ENCODE measurements at regions of chr4 and their contacts with region 1.

Region 1: GRCh38 chr4:56467284-56468096 is at the start of gene SRP72:
- DNase-seq: peak; percentile 87
- H3K4me3 Mint-ChIP-seq: peak within 1 kb of the TSS; percentile 100
- H3K27ac Mint-ChIP-seq: peak within 1 kb of the TSS; percentile 100
- H3K4me1 Mint-ChIP-seq: peaks cover 38% of the 10 kb centered on the region
- H3K27me3 Mint-ChIP-seq: no peaks in the 10 kb centered on the region
- total RNA-seq, gene SRP72: 187 and 191 TPM in 2 replicates

Region 2: DNA sequence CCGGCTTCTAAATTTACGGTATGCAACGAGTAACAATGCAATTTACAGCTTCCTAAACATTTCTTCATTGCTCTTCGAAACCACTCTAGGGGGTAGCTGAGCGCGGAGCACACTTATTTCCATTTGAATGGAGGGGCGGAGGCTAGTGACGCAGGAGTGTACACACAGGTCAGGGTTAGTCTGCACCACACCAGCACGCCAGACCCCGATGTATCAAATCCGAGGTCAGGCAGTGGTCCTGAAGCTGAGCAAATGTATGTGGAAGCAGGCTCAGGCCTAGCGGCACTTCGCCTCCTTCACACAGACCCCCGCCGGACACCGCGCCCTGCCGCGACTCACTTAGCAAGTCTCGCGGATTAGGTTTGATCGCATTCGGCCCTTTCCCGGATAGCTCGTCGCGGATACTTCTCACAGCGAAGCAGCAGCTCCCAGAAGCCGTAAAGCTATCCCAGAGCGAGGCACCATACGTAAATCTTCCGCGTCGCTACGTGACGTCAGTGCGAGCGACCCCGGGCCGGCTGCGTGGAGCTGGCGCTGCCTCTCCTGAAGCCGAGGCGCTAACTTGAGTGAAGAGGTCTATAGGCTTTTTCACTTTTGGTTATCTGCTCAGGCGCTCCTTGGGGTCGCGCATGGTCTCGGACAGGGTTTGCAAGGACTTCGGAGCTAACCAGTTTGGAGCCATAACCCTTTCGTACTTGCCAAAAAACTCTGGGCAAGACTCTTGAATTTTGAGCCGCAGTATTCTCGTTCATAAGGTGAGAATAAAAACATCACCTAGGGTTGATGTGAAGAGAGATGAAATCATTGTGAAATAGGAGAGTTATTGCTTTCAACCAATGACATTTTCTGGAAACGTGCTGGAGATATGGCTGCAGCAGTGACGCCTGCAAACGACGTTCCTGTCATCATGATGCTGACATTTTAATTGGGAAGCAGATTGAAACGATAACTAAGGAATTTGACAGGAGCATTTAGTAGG is 80.2 kb before region 1 on chr4 and contains the start of gene AASDH:
- intact Hi-C with region 1: loop called (anchors 1 kb)
- DNase-seq: peak; percentile 91
- H3K4me3 Mint-ChIP-seq: peak within 1 kb of the TSS; percentile 92
- H3K27ac Mint-ChIP-seq: peak within 1 kb of the TSS; percentile 98
- H3K4me1 Mint-ChIP-seq: peaks cover 25% of the 10 kb centered on the region
- H3K27me3 Mint-ChIP-seq: no peaks in the 10 kb centered on the region
- total RNA-seq, gene AASDH: 10.4 and 15.4 TPM in 2 replicates

Region 3: DNA sequence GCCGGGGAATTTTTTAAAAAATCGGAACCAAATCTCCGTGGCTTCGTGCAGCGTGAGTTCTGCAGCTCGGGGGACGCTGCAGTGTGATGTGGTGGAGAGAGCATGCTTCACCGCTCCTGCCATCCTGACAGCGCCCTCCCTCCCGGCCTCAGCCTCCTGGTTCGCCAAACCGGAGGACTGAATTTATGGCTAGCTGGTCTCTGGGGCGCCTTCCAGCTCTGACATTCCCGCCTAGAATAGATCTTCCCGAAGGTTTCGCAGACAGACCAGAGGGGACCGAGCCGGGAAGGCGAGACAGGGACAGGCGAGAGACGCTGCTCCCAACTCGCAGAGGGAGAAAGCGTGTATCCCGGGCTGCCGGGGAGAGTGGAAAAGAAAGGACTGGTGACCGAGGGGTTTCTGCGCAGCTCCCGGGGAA is 187.7 kb after region 1 on chr4:
- intact Hi-C with region 1: loop called (anchors 10 kb)
- DNase-seq: no peak
- H3K4me3 Mint-ChIP-seq: peak overlapping the region; percentile 87
- H3K27ac Mint-ChIP-seq: peak overlapping the region; percentile 65
- H3K4me1 Mint-ChIP-seq: peaks cover 61% of the 10 kb centered on the region
- H3K27me3 Mint-ChIP-seq: peaks cover 31% of the 10 kb centered on the region

Region 4: DNA sequence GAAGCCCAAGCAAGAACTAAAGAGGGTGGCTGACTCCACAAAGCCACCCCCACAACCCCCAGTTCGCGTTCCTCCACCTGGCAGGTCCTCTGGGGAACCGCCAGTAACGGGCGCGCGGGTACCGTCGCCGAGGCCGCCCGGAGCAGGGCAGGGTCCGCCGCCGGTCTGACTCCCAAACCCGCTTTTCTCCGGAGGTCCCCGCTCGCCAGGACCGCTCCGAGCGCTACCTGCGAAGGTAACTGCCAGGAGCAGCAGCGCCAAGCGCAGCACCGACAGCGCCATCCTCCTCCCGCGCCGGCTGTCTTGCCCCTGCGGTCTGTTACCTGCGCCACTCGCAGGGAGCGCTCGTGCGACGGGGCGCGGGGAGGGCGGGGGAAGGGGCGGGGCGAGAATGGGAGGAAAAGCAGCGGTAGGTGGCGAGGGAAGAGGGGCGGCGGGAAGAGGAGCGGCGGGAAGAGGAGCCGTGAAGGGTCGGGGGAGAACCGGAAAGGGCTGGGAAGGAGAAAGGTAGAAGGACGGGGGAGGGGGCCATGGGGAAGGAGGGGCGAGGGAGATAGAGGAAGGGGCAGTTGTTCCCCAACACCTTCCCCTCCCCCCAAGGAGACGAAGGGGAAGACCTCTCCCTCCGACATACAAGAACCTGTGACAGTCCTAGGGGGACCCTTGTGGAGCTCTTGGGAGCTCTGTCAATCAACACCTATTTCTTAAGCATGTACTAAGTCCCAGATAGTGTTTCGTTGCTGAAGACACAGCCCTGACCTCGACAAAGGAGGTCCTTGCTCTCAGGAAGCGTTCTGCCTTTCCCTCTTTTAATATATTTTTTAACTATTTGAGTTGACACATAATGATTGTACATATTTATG is 354.1 kb after region 1 on chr4 and contains the start of gene SPINK2:
- intact Hi-C with region 1: loop called (anchors 5 kb)
- DNase-seq: peak; percentile 45
- H3K4me3 Mint-ChIP-seq: peak within 1 kb of the TSS; percentile 58
- H3K27ac Mint-ChIP-seq: no peak within 1 kb of the TSS
- H3K4me1 Mint-ChIP-seq: peaks cover 24% of the 10 kb centered on the region
- H3K27me3 Mint-ChIP-seq: peaks cover 41% of the 10 kb centered on the region
- total RNA-seq, gene SPINK2: 0.75 TPM in 1 of 2 replicates, not detected in the other

Region 5: DNA sequence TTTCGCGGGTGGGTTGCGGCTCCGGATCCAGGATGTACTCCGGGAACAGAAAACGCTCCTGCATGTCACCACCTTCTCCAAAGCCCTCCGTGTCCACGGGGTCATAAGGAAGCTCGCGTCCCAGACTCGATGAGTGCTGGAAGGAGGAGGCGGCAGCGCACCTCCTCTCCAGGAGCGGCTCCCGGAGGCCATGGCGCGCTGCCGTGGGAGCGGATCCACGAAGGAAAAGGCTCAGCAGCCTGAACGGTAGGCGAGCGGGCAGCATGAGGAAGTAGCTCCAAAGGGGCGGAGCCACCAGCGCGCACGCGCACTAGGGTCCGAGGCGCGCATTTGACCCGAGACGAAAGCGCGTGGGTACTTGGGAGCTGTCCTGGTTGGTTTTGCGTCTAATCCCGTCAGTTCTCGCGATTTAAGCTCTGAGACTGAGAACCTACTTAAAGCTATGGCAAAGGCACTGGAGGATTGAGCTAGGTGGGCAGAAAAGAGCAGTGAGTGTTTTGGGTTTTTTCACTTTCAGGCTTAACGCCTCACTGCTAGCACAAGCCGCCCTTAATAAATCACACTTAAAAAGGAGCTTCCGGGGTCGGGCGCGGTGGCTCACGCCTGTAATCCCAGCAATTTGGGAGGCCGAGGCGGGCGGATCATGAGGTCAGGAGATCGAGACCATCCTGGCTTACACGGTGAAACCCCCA is 510.0 kb after region 1 on chr4 and contains the start of gene NOA1:
- intact Hi-C with region 1: loop called (anchors 2 kb)
- DNase-seq: peak; percentile 98
- H3K4me3 Mint-ChIP-seq: peak within 1 kb of the TSS; percentile 100
- H3K27ac Mint-ChIP-seq: peak within 1 kb of the TSS; percentile 100
- H3K4me1 Mint-ChIP-seq: peaks cover 41% of the 10 kb centered on the region
- H3K27me3 Mint-ChIP-seq: no peaks in the 10 kb centered on the region
- total RNA-seq, gene NOA1: 16.5 and 18.1 TPM in 2 replicates

Measured in activated T-helper 2 cell treated with anti-CD3 and anti-CD28 coated beads, Interferon-gamma antibody, Interleukin-2, Interleukin-4, amounts not matched to agents 10 μg/mL and 5 μg/mL and 100 μg/mL, durations not matched to agents 14 hours and 24 hours and 36 hours (primary cell).